Psoas muscle (tissue), 8 donors: ENCODE measurements at regions of chr12 and their contacts with region 1.

Region 1: GRCh38 chr12:7188562-7189397 is 706 bp upstream of the PEX5 start:
- DNase-seq: peak; percentile 70 to 79
- ATAC-seq: peak; percentile 69 to 83 (median 79)
- H3K4me3 ChIP-seq: peak overlapping the region; percentile 99
- H3K27ac ChIP-seq: peak overlapping the region; percentile 99
- H3K4me1 ChIP-seq: peaks cover 20% of the 10 kb centered on the region
- H3K27me3 ChIP-seq: no peaks in the 10 kb centered on the region
- CTCF ChIP-seq: peak; percentile 52

Region 2: DNA sequence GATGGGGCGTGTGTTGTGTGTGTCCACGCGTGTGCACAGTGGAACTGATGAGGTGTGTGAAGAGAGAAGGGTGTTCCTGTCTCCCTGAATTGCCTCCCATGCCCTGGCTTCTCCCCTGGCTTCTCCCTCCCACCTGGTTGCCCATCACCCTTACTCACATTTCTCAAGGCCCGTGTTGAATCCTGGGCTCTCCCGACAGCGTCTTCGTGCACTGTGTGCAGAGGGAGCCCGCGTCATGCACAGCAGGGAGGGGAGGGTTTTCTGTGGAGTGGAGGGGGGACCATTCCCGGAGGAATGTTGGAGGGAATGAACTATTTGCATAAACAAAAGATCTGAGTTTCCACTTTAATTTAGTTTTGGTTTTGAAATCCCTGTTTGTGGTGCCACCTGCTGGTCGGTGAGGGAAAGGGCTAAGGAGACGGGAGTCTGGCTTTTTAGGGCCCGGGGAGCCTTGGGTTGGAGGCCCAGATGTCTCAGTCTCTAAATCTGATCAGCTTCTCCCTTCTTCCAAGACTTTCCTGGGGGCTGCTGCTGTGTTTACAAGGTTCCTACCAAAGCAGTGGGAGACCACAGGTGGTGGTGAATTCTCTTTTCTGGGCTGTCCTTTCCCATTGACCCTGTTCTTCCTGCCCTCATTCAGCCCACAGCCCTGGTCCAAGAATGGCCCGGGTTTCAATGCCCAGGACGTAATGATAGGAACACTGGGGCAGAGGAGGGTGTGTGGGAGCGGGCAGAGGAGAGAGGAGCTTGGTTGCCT is 96.4 kb before region 1 on chr12 and contains the start of gene C1R:
- intact Hi-C with region 1: no loop called
- DNase-seq: peak; percentile 80 to 89
- ATAC-seq: peak; percentile 57 to 73 (median 63)
- H3K4me3 ChIP-seq: peak within 1 kb of the TSS; percentile 65
- H3K27ac ChIP-seq: peak within 1 kb of the TSS; percentile 58
- H3K4me1 ChIP-seq: peaks cover 11% of the 10 kb centered on the region
- H3K27me3 ChIP-seq: no peaks in the 10 kb centered on the region
- CTCF ChIP-seq: peak; percentile 91
- total RNA-seq, gene C1R: 63.2 to 70.9 (median 68.1) TPM

Region 3: GRCh38 chr12:7142056-7142644 is 46.6 kb before region 1 on chr12:
- intact Hi-C with region 1: loop called in 1 of 2 experiments (anchors 1 kb)
- DNase-seq: no peak
- ATAC-seq: peak in 2 of 4 donors; percentile 76
- H3K4me3 ChIP-seq: no peak overlapping the region
- H3K27ac ChIP-seq: no peak overlapping the region
- H3K4me1 ChIP-seq: no peaks in the 10 kb centered on the region
- H3K27me3 ChIP-seq: no peaks in the 10 kb centered on the region
- CTCF ChIP-seq: peak; percentile 65

Region 4: DNA sequence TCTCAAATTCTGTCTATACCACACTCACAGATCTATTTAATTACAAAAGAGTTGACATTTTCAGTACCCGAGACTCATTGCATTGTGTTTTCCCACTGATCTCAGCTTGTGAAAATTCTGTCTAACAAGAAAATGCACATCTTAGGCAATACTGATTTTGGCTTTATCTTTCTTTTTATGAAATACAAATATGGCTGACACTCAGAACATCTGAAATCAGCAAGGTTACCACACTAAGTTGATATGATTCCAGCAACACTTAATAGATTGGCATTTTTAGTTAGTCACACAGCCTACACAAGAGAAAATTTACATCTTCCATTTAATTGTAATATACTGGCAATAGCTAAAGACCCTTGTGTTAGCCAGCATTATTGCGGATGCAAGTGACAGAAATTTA is 41.0 kb after region 1 on chr12:
- intact Hi-C with region 1: no loop called
- DNase-seq: no peak
- ATAC-seq: no peak
- H3K4me3 ChIP-seq: no peak overlapping the region
- H3K27ac ChIP-seq: no peak overlapping the region
- H3K4me1 ChIP-seq: no peaks in the 10 kb centered on the region
- H3K27me3 ChIP-seq: no peaks in the 10 kb centered on the region
- CTCF ChIP-seq: no peak

Region 5: GRCh38 chr12:8032242-8033152 is 843.7 kb after region 1 on chr12 and contains the start of gene FOXJ2:
- intact Hi-C with region 1: loop called in 1 of 2 experiments (anchors 10 kb)
- DNase-seq: peak; percentile 84 to 90
- ATAC-seq: peak; percentile 81 to 86 (median 84)
- H3K4me3 ChIP-seq: peak within 1 kb of the TSS; percentile 97
- H3K27ac ChIP-seq: peak within 1 kb of the TSS; percentile 99
- H3K4me1 ChIP-seq: peaks cover 37% of the 10 kb centered on the region
- H3K27me3 ChIP-seq: no peaks in the 10 kb centered on the region
- CTCF ChIP-seq: no peak
- total RNA-seq, gene FOXJ2: 24.5 to 51.3 (median 37.7) TPM